ENCODE measurements at regions of chr11 and their contacts with region 1.

Region 1: GRCh38 chr11:44621140-44621681 is 55.7 kb downstream of the CD82 start:
- DNase-seq: peak; percentile 44 to 69 (median 50)
- H3K4me3 ChIP-seq: no peak overlapping the region
- H3K4me3 Mint-ChIP-seq: no peak overlapping the region
- H3K27ac ChIP-seq: no peak overlapping the region
- H3K27ac Mint-ChIP-seq: no peak overlapping the region
- H3K4me1 ChIP-seq: peaks cover 6% of the 10 kb centered on the region
- H3K4me1 Mint-ChIP-seq: peaks cover 17 to 27% (median 18%) of the 10 kb centered on the region in 3 donors
- H3K27me3 ChIP-seq: no peaks in the 10 kb centered on the region
- H3K27me3 Mint-ChIP-seq: peaks cover 0 to 2% of the 10 kb centered on the region in 2 donors

Region 2: GRCh38 chr11:44269369-44270351 is 351.6 kb before region 1 on chr11:
- CTCF ChIA-PET with region 1: no interaction called
- POLR2A ChIA-PET with region 1: no interaction called
- DNase-seq: no peak
- H3K4me3 ChIP-seq: no peak overlapping the region
- H3K4me3 Mint-ChIP-seq: no peak overlapping the region
- H3K27ac ChIP-seq: peak overlapping the region; percentile 57
- H3K27ac Mint-ChIP-seq: no peak overlapping the region
- H3K4me1 ChIP-seq: no peaks in the 10 kb centered on the region
- H3K4me1 Mint-ChIP-seq: no peaks in the 10 kb centered on the region
- H3K27me3 ChIP-seq: no peaks in the 10 kb centered on the region
- H3K27me3 Mint-ChIP-seq: peaks cover 4 to 5% of the 10 kb centered on the region in 2 donors

Region 3: DNA sequence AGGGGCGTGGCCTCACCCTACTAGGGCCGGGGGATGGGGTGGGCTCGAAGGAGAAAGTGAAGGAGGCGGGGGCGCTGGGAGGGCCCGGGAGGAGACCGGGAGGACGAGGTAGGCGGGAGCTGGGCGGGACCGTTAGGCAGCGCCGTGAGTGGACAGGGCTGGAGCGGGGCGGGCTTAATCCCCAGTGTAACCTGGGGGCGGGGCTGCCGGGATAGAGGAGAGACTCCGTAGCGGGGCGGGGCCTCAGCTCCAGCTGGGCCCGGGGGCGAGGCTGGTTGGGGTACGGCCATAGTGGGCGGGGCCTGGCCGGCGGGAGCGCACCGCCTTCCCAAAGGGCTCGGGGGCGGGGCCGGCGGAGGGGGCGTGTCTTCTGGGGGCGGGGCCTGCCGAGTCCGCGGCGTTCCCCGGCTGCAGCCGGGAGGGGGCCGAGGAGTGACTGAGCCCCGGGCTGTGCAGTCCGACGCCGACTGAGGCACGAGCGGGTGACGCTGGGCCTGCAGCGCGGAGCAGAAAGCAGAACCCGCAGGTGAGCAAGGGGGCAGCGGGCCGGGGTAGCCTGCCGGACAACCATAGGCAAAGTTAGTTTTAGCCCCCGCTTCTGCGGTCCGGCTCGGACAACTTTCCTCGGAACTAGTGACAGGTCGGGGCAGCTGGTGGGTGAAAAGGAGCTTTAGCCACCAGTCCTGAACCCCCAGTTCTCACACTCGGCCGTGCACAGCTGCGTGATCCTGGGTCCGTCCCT is 55.8 kb before region 1 on chr11 and contains the start of gene CD82:
- CTCF ChIA-PET with region 1: interaction called, 532 read pairs
- POLR2A ChIA-PET with region 1: no interaction called
- DNase-seq: peak; percentile 91 to 97 (median 96)
- H3K4me3 ChIP-seq: peak within 1 kb of the TSS; percentile 98
- H3K4me3 Mint-ChIP-seq: peak within 1 kb of the TSS; percentile 86 to 94 (median 90)
- H3K27ac ChIP-seq: peak within 1 kb of the TSS; percentile 54
- H3K27ac Mint-ChIP-seq: peak within 1 kb of the TSS; percentile 77 to 96 (median 91)
- H3K4me1 ChIP-seq: peaks cover 54% of the 10 kb centered on the region
- H3K4me1 Mint-ChIP-seq: peaks cover 49 to 62% (median 53%) of the 10 kb centered on the region in 3 donors
- H3K27me3 ChIP-seq: no peaks in the 10 kb centered on the region
- H3K27me3 Mint-ChIP-seq: no peaks in the 10 kb centered on the region
- total RNA-seq, gene CD82: 356 to 388 TPM

Region 4: DNA sequence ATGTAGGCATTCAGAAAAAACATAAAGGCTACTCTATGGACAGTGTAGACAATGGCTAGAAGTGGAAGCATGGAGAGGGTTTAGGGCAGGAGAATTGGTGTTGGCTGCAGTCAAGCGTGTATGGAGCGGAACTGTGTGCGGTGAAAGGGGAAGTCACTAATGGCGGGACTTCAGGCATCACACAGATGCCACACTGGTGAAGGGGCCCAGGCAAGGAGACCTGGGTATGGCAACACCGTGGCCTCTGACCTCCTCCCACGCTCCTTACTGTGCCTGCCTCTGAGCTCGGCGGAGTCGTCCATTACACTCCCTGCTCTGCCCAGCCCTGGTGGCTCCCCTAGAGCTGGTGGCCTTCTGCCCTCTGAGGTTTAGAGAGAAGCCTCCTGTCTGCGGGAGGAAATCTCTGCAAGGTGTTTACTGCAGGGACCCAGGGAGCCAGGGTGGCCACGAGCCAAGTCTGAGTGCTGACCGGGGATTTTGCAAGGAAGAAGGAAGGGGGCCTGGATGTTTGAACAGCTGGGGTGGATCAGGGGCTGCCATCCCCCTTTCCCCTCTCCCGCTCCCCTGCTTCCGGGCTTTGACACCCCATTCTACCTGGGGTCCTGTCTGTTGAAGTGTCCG is 30.4 kb after region 1 on chr11:
- CTCF ChIA-PET with region 1: no interaction called
- POLR2A ChIA-PET with region 1: no interaction called
- DNase-seq: no peak
- H3K4me3 ChIP-seq: no peak overlapping the region
- H3K4me3 Mint-ChIP-seq: no peak overlapping the region
- H3K27ac ChIP-seq: no peak overlapping the region
- H3K27ac Mint-ChIP-seq: peak overlapping the region in 1 of 8 donors; percentile 63
- H3K4me1 ChIP-seq: no peaks in the 10 kb centered on the region
- H3K4me1 Mint-ChIP-seq: peaks cover 6 to 9% (median 8%) of the 10 kb centered on the region in 3 donors
- H3K27me3 ChIP-seq: no peaks in the 10 kb centered on the region
- H3K27me3 Mint-ChIP-seq: peaks cover 24 to 66% of the 10 kb centered on the region in 2 donors

Region 5: GRCh38 chr11:44775366-44775984 is 154.3 kb after region 1 on chr11:
- CTCF ChIA-PET with region 1: interaction called, 10 read pairs
- POLR2A ChIA-PET with region 1: interaction called, 3 read pairs
- DNase-seq: peak; percentile 34 to 66 (median 40)
- H3K4me3 ChIP-seq: no peak overlapping the region
- H3K4me3 Mint-ChIP-seq: no peak overlapping the region
- H3K27ac ChIP-seq: no peak overlapping the region
- H3K27ac Mint-ChIP-seq: peak overlapping the region in 1 of 8 donors; percentile 2
- H3K4me1 ChIP-seq: no peaks in the 10 kb centered on the region
- H3K4me1 Mint-ChIP-seq: peaks cover 0 to 7% (median 7%) of the 10 kb centered on the region in 3 donors
- H3K27me3 ChIP-seq: no peaks in the 10 kb centered on the region
- H3K27me3 Mint-ChIP-seq: peaks cover 0 to 2% of the 10 kb centered on the region in 2 donors